CD4-positive, alpha-beta memory T cell (primary cell): ENCODE measurements at regions of chr6 and their contacts with region 1.

Region 1: GRCh38 chr6:142146828-142147662 is at the starts of genes NMBR and VTA1:
- DNase-seq: peak; percentile 97 to 98 (median 98)
- H3K4me3 ChIP-seq: peak within 1 kb of the TSS; percentile 86 to 100
- H3K4me3 Mint-ChIP-seq: peak within 1 kb of the TSS; percentile 81 to 97 (median 94)
- H3K27ac ChIP-seq: peak within 1 kb of the TSS; percentile 73
- H3K27ac Mint-ChIP-seq: peak within 1 kb of the TSS; percentile 83 to 96 (median 94)
- H3K4me1 ChIP-seq: peaks cover 39% of the 10 kb centered on the region
- H3K4me1 Mint-ChIP-seq: peaks cover 46 to 61% (median 53%) of the 10 kb centered on the region in 4 donors
- H3K27me3 ChIP-seq: no peaks in the 10 kb centered on the region
- H3K27me3 Mint-ChIP-seq: no peaks in the 10 kb centered on the region
- total RNA-seq, gene NMBR: not detected
- total RNA-seq, gene VTA1: 31.2 to 31.4 TPM

Region 2: GRCh38 chr6:142035890-142036289 is 111.2 kb before region 1 on chr6:
- CTCF ChIA-PET with region 1: no interaction called
- POLR2A ChIA-PET with region 1: no interaction called
- intact Hi-C with region 1: no loop called
- DNase-seq: no peak
- H3K4me3 ChIP-seq: no peak overlapping the region
- H3K4me3 Mint-ChIP-seq: no peak overlapping the region
- H3K27ac ChIP-seq: no peak overlapping the region
- H3K27ac Mint-ChIP-seq: no peak overlapping the region
- H3K4me1 ChIP-seq: no peaks in the 10 kb centered on the region
- H3K4me1 Mint-ChIP-seq: no peaks in the 10 kb centered on the region
- H3K27me3 ChIP-seq: no peaks in the 10 kb centered on the region
- H3K27me3 Mint-ChIP-seq: peaks cover 0 to 2% of the 10 kb centered on the region in 2 donors

Region 3: DNA sequence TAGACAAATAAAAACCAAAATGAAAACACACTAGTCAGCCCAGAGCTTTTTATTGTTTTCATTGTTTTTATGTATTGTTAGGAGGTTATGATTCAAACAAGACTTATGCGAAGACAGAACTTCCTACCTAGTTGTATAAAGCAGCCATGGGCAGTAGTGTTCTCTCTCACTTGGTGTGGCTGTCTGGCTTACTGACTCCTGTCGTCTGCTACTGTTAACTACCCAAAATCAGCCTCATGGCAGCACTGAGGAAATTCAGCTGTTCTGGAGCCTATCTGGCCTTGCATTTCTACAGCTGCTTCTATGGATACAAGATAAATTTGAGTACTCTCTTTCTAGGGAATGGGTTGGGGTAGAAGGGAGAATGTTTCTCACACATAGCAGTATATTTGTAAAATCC is 20.4 kb after region 1 on chr6:
- CTCF ChIA-PET with region 1: interaction called, 4 read pairs
- POLR2A ChIA-PET with region 1: no interaction called
- intact Hi-C with region 1: loop called (anchors 2 kb)
- DNase-seq: no peak
- H3K4me3 ChIP-seq: no peak overlapping the region
- H3K4me3 Mint-ChIP-seq: no peak overlapping the region
- H3K27ac ChIP-seq: no peak overlapping the region
- H3K27ac Mint-ChIP-seq: no peak overlapping the region
- H3K4me1 ChIP-seq: peaks cover 9% of the 10 kb centered on the region
- H3K4me1 Mint-ChIP-seq: peaks cover 15 to 25% (median 19%) of the 10 kb centered on the region in 4 donors
- H3K27me3 ChIP-seq: no peaks in the 10 kb centered on the region
- H3K27me3 Mint-ChIP-seq: no peaks in the 10 kb centered on the region

Region 4: GRCh38 chr6:142387997-142388815 is 241.2 kb after region 1 on chr6:
- CTCF ChIA-PET with region 1: interaction called, 8 read pairs
- POLR2A ChIA-PET with region 1: no interaction called
- intact Hi-C with region 1: loop called (anchors 1 kb)
- DNase-seq: peak in 4 of 5 donors; percentile 7 to 30 (median 11)
- H3K4me3 ChIP-seq: no peak overlapping the region
- H3K4me3 Mint-ChIP-seq: no peak overlapping the region
- H3K27ac ChIP-seq: no peak overlapping the region
- H3K27ac Mint-ChIP-seq: no peak overlapping the region
- H3K4me1 ChIP-seq: no peaks in the 10 kb centered on the region
- H3K4me1 Mint-ChIP-seq: no peaks in the 10 kb centered on the region
- H3K27me3 ChIP-seq: no peaks in the 10 kb centered on the region
- H3K27me3 Mint-ChIP-seq: peaks cover 0 to 3% of the 10 kb centered on the region in 2 donors

Region 5: GRCh38 chr6:142537612-142538478 is 390.8 kb after region 1 on chr6:
- CTCF ChIA-PET with region 1: no interaction called
- POLR2A ChIA-PET with region 1: no interaction called
- intact Hi-C with region 1: loop called (anchors 1 kb)
- DNase-seq: no peak
- H3K4me3 ChIP-seq: no peak overlapping the region
- H3K4me3 Mint-ChIP-seq: no peak overlapping the region
- H3K27ac ChIP-seq: no peak overlapping the region
- H3K27ac Mint-ChIP-seq: no peak overlapping the region
- H3K4me1 ChIP-seq: no peaks in the 10 kb centered on the region
- H3K4me1 Mint-ChIP-seq: no peaks in the 10 kb centered on the region
- H3K27me3 ChIP-seq: no peaks in the 10 kb centered on the region
- H3K27me3 Mint-ChIP-seq: no peaks in the 10 kb centered on the region

Region 6: DNA sequence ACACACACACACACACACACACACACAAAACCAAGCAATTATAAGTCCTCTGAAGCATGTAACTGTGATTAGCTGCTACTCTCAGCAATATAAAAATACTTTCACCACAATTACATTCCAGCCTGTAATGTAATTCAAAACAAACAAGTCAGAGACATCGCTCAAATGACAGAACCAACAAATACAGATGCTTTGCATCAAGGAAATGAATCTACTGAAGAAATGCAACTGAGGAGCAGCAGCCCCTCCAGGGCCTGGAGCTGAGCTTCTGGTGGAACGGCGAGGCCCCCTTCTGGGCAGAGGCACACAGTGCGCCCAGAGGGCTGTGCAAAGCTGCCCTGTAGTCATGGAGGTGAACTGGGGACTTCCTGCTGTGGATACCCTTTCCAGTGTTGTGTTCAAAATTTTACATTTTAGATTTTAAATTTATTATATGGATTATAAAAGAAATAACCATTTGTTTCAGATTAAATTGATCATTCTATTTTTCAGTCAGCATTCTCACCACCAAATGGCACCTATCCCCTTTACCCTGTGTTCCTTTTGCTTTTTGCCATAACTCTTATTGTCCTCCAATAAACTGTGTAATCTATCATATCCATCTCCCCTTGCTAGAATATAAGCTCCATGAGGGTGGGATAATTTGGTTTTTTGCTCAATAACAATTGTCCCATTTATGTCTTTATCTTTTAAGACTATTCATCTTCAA is 1280.2 kb after region 1 on chr6:
- CTCF ChIA-PET with region 1: interaction called, 3 read pairs
- POLR2A ChIA-PET with region 1: no interaction called
- intact Hi-C with region 1: loop called (anchors 1 kb)
- DNase-seq: peak; percentile 65 to 73 (median 70)
- H3K4me3 ChIP-seq: no peak overlapping the region
- H3K4me3 Mint-ChIP-seq: no peak overlapping the region
- H3K27ac ChIP-seq: no peak overlapping the region
- H3K27ac Mint-ChIP-seq: peak overlapping the region in 2 of 7 donors; percentile 15 to 81
- H3K4me1 ChIP-seq: no peaks in the 10 kb centered on the region
- H3K4me1 Mint-ChIP-seq: no peaks in the 10 kb centered on the region
- H3K27me3 ChIP-seq: no peaks in the 10 kb centered on the region
- H3K27me3 Mint-ChIP-seq: no peaks in the 10 kb centered on the region

Region 7: DNA sequence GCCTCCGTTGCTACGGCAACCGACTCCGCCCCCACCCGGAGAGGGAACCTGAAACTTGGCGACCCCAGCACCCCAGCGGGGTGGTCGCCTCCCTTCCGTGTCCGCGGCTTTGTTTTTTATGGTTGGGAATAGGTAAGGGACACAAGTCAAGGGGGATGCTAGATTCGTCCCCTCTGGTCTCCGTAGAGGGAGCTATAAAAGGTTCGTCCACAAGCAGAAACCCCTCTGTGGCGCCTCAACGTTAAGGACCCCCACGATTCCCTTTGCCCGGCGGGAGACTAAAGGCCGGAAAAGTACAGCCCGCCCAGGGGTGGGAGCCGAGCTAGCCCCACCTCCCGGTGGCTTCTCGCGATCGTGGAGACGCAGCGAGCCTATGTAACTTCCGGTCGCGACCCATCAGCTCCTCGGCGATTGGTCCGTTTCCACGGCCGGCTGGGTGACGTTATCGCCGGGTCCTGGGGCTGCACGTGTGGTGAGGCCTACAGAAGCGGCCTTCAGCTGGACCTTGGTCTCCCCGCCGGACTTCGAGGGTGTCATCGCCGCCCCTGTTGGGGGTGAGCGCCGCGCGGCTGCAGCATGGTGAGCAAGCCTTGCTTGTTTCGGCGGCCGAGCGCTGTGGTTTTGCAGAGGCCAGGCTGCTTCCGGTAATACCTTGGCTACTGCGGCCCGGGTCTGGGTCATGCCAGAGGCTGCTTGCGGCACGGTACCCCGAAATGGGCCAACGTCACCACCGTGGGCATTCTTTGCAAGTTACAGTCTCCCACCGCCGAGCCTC is 1696.0 kb after region 1 on chr6 and contains the start of gene LTV1:
- CTCF ChIA-PET with region 1: no interaction called
- POLR2A ChIA-PET with region 1: no interaction called
- intact Hi-C with region 1: loop called (anchors 2 kb)
- DNase-seq: peak; percentile 89 to 92 (median 90)
- H3K4me3 ChIP-seq: peak within 1 kb of the TSS; percentile 54 to 90
- H3K4me3 Mint-ChIP-seq: peak within 1 kb of the TSS; percentile 93 to 97 (median 95)
- H3K27ac ChIP-seq: peak within 1 kb of the TSS; percentile 92
- H3K27ac Mint-ChIP-seq: peak within 1 kb of the TSS; percentile 96 to 99 (median 98)
- H3K4me1 ChIP-seq: peaks cover 15% of the 10 kb centered on the region
- H3K4me1 Mint-ChIP-seq: peaks cover 19 to 32% (median 25%) of the 10 kb centered on the region in 4 donors
- H3K27me3 ChIP-seq: no peaks in the 10 kb centered on the region
- H3K27me3 Mint-ChIP-seq: no peaks in the 10 kb centered on the region
- total RNA-seq, gene LTV1: 19.9 to 20.8 TPM